CD4-positive, alpha-beta T cell (primary cell): ENCODE measurements at regions of chr17 and their contacts with region 1.

Region 1: GRCh38 chr17:33712120-33712519 is 419.0 kb upstream of the ASIC2 start:
- DNase-seq: no peak
- ATAC-seq: no peak
- H3K4me3 ChIP-seq: no peak overlapping the region
- H3K4me3 Mint-ChIP-seq: no peak overlapping the region
- H3K27ac ChIP-seq: no peak overlapping the region
- H3K27ac Mint-ChIP-seq: no peak overlapping the region
- H3K4me1 ChIP-seq: no peaks in the 10 kb centered on the region
- H3K4me1 Mint-ChIP-seq: no peaks in the 10 kb centered on the region
- H3K27me3 ChIP-seq: no peaks in the 10 kb centered on the region
- H3K27me3 Mint-ChIP-seq: peaks cover 41% of the 10 kb centered on the region
- CTCF ChIP-seq: no peak

Region 2: GRCh38 chr17:33651686-33652085 is 60.4 kb before region 1 on chr17:
- CTCF ChIA-PET with region 1: no interaction called
- POLR2A ChIA-PET with region 1: no interaction called
- intact Hi-C with region 1: loop called in 1 of 2 experiments (anchors 10 kb)
- DNase-seq: no peak
- ATAC-seq: no peak
- H3K4me3 ChIP-seq: no peak overlapping the region
- H3K4me3 Mint-ChIP-seq: no peak overlapping the region
- H3K27ac ChIP-seq: no peak overlapping the region
- H3K27ac Mint-ChIP-seq: no peak overlapping the region
- H3K4me1 ChIP-seq: no peaks in the 10 kb centered on the region
- H3K4me1 Mint-ChIP-seq: no peaks in the 10 kb centered on the region
- H3K27me3 ChIP-seq: no peaks in the 10 kb centered on the region
- H3K27me3 Mint-ChIP-seq: peaks cover 9% of the 10 kb centered on the region
- CTCF ChIP-seq: no peak

Region 3: DNA sequence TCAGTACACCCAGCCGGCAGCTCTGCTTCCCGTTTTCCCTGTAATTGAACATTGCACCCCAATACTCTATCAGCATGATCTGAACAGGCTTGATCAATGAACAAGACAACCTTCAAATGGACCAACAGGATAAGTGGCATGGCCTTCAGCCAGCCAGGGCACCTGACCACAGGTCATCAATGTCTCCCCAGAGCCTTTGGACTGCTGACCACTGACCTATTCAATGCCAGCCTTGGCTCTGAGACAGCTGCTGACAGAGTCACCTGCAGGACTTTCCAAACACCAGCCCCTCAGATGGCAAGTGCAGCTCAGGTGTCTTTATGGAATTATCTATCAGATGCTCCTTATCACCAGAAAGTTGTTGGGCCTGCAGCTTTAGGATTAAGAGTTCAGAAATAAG is 43.9 kb after region 1 on chr17:
- CTCF ChIA-PET with region 1: no interaction called
- POLR2A ChIA-PET with region 1: no interaction called
- intact Hi-C with region 1: no loop called
- DNase-seq: no peak
- ATAC-seq: no peak
- H3K4me3 ChIP-seq: no peak overlapping the region
- H3K4me3 Mint-ChIP-seq: no peak overlapping the region
- H3K27ac ChIP-seq: no peak overlapping the region
- H3K27ac Mint-ChIP-seq: no peak overlapping the region
- H3K4me1 ChIP-seq: no peaks in the 10 kb centered on the region
- H3K4me1 Mint-ChIP-seq: peaks cover 5% of the 10 kb centered on the region
- H3K27me3 ChIP-seq: peaks cover 18 to 25% of the 10 kb centered on the region in 2 experiments
- H3K27me3 Mint-ChIP-seq: peaks cover 37% of the 10 kb centered on the region
- CTCF ChIP-seq: no peak

Region 4: DNA sequence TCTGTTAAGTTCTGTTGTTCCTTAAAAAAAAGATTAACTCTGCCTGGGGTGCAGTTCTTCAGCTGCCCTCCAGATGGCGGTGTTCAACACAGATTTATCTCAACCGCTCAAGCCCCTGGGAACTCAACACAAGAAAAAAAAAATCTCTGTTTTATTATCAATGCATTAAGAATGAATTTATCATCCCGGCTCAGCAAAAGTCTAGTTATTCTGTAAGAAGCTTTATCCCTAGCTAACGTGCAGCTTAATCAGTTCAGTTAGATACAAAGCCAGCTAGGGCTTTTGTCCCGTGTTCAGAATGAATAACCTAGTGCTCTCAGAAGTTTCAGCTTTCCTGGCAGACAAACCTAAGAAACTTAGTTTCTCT is 67.1 kb after region 1 on chr17:
- CTCF ChIA-PET with region 1: no interaction called
- POLR2A ChIA-PET with region 1: no interaction called
- intact Hi-C with region 1: no loop called
- DNase-seq: peak in 9 of 14 experiments; percentile 2 to 60 (median 11)
- ATAC-seq: no peak
- H3K4me3 ChIP-seq: no peak overlapping the region
- H3K4me3 Mint-ChIP-seq: no peak overlapping the region
- H3K27ac ChIP-seq: no peak overlapping the region
- H3K27ac Mint-ChIP-seq: no peak overlapping the region
- H3K4me1 ChIP-seq: no peaks in the 10 kb centered on the region
- H3K4me1 Mint-ChIP-seq: no peaks in the 10 kb centered on the region
- H3K27me3 ChIP-seq: peaks cover 10 to 11% of the 10 kb centered on the region in 2 experiments
- H3K27me3 Mint-ChIP-seq: peaks cover 38% of the 10 kb centered on the region
- CTCF ChIP-seq: peak; percentile 91